Aorta (tissue), 5 donors: ENCODE measurements at regions of chrX and their contacts with region 1.

Region 1: DNA sequence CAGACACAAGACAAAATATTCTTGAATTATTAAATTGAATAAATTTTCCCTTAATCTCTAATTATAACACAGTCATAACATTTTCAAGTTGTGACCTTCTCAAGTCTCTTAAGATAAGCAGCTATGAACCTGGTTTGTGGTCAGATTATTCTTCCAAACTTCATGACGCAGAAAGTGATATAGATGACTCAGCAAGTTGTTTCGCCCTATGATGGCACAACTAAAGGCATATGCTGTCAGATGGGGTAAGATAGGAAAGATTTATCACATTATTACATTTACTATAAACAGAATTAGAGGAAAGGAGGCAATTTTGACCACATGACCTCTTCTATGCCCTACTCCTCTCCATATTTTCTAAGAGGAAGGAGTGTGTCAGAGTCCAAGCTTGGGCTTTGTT is 4.6 kb upstream of the DCAF12L2 start:
- DNase-seq: no peak
- ATAC-seq: no peak
- H3K4me3 ChIP-seq: no peak overlapping the region
- H3K27ac ChIP-seq: no peak overlapping the region
- H3K4me1 ChIP-seq: no peaks in the 10 kb centered on the region
- H3K27me3 ChIP-seq: no peaks in the 10 kb centered on the region

Region 2: GRCh38 chrX:126027229-126027628 is 143.5 kb before region 1 on chrX:
- intact Hi-C with region 1: loop called in 1 of 2 experiments (anchors 10 kb)
- DNase-seq: no peak
- ATAC-seq: no peak
- H3K4me3 ChIP-seq: no peak overlapping the region
- H3K27ac ChIP-seq: no peak overlapping the region
- H3K4me1 ChIP-seq: no peaks in the 10 kb centered on the region
- H3K27me3 ChIP-seq: no peaks in the 10 kb centered on the region

Region 3: GRCh38 chrX:126376465-126376864 is 205.7 kb after region 1 on chrX:
- intact Hi-C with region 1: no loop called
- DNase-seq: no peak
- ATAC-seq: no peak
- H3K4me3 ChIP-seq: no peak overlapping the region
- H3K27ac ChIP-seq: no peak overlapping the region
- H3K4me1 ChIP-seq: no peaks in the 10 kb centered on the region
- H3K27me3 ChIP-seq: no peaks in the 10 kb centered on the region